GM10248 (cell line): ENCODE measurements at regions of chr4 and their contacts with region 1.

Region 1: GRCh38 chr4:47551682-47552081 is 66.6 kb downstream of the ATP10D start:
- DNase-seq: no peak
- CTCF ChIP-seq: no peak

Region 2: GRCh38 chr4:46954643-46955042 is 597.0 kb before region 1 on chr4:
- CTCF ChIA-PET with region 1: no interaction called
- POLR2A ChIA-PET with region 1: no interaction called
- DNase-seq: no peak
- CTCF ChIP-seq: no peak

Region 3: DNA sequence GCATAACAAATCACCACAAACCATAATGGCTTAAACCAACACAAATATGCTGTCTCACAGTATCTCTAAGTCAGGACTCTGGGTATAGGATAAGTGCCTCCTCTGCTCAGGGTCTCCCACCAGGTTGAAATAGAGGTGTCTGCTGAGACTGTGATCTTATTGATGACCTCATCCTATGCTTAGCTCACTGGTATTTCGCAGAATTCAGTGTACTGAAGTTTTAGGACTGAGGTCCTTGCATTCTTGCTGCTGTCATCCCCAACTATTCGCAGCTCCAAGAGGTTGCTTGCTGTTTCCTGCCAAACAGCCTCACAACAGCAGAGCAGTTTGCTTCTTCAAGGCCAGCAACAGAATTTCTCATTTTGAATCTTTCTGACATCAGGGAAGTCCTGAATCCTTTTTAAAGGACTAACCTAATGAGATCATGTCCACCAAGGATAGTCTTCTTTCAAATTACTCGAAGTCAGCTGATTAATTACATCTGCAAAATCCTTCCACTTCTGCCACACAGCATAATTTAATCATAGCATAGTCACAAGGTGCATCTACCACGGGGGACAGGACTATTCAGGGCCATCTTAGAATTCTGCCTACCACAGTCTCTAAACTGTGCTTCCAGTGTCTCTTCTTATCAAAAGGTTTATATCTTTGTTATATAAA is 13.1 kb before region 1 on chr4:
- CTCF ChIA-PET with region 1: interaction called, 10 read pairs
- POLR2A ChIA-PET with region 1: no interaction called
- DNase-seq: no peak
- CTCF ChIP-seq: no peak

Region 4: GRCh38 chr4:47567511-47567910 is 15.8 kb after region 1 on chr4:
- CTCF ChIA-PET with region 1: interaction called, 33 read pairs
- POLR2A ChIA-PET with region 1: no interaction called
- DNase-seq: no peak
- CTCF ChIP-seq: no peak